PC-9 (cell line): ENCODE measurements at regions of chr14 and their contacts with region 1.

Region 1: DNA sequence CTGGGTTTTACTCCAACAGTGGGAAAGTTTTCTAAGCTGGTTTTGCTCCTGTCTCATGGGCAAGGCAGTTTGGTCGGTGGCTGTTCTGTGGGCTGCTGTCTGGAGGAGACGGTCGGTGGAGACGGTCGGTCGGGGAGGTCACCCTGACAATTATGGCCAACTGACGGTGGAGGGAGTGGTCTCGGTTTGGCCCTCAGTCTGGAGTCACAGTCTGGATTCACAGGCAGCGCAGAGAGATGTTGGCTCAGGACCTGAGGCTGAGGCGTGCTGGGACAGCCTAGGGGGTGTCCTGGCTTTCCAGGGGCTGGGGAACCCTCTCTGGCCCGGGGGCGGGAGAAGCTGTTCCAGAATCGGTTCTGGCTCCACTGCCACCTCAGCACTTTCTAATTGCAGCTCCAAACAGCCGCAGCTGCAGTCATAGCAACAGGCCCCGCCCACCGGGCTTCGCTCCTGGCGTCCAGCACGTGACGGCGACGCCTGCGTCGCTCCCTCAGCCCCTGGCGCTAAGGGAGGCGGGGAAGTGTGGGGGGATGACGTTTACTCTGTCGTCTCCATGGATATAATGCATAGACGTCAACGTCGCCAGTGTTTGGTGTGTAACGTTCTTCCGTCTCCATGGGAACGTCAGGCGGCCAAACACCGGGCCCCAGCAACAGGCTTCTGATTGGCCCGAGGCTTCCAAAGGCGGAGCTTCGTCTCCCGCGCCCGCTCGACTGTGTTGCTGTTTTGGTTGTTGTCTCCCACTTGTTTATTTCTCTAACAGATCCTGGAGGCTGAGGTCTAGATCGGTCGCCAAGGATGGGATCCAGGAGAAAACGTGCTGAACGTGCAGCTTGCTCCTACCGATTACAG is 19.8 kb upstream of the FOS start:
- DNase-seq: peak; percentile 100
- H3K4me3 ChIP-seq: peak overlapping the region; percentile 56
- H3K27ac ChIP-seq: peak overlapping the region; percentile 83
- H3K4me1 ChIP-seq: peaks cover 63% of the 10 kb centered on the region
- H3K27me3 ChIP-seq: no peaks in the 10 kb centered on the region
- CTCF ChIP-seq: no peak

Region 2: GRCh38 chr14:73913256-73913655 is 1345.6 kb before region 1 on chr14:
- CTCF ChIA-PET with region 1: no interaction called
- POLR2A ChIA-PET with region 1: no interaction called
- intact Hi-C with region 1: no loop called
- DNase-seq: no peak
- H3K4me3 ChIP-seq: no peak overlapping the region
- H3K27ac ChIP-seq: no peak overlapping the region
- H3K4me1 ChIP-seq: 0 out of 2 replicates have a peak, but pooled peaks cover 8% of the 10 kb centered on the region
- H3K27me3 ChIP-seq: no peaks in the 10 kb centered on the region
- CTCF ChIP-seq: no peak

Region 3: DNA sequence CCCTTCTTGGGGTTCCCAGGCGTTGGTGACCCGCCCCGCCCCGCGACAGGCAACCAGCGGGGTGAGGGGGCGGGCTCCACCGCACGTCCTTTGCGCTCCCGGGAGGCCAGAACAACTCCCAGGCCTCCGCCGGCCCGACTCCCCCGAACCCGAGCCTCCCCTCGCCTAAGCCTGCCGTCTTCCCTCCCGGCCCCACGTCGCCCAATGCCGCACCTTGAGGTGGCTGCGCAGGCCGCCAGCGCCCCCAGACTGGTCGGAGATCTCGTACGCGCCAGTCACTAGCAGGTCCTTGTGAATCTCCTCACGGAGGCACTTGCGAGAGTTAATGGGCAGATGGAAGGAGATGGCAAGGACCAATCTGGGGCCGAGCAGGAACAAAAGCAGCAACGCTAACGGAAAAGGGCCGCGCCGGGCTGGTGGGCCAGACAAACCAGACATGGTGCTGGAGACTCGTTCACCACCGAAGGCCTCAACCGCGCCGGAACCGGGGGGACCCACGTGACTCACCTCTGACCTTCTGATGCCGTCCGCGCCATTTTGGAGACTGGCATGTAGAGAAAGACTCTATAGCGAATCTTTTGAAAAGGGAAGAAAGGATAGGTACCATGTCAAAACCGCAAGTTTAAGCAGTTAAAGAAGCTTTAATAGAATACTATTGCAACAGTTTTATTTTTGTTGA is 82.6 kb before region 1 on chr14 and contains the start of gene TMED10:
- CTCF ChIA-PET with region 1: interaction called, 3 read pairs
- POLR2A ChIA-PET with region 1: interaction called, 11 read pairs
- intact Hi-C with region 1: loop called (anchors 1 kb)
- DNase-seq: peak; percentile 84 to 96
- H3K4me3 ChIP-seq: peak within 1 kb of the TSS; percentile 80
- H3K27ac ChIP-seq: peak within 1 kb of the TSS; percentile 94
- H3K4me1 ChIP-seq: peaks cover 26% of the 10 kb centered on the region
- H3K27me3 ChIP-seq: no peaks in the 10 kb centered on the region
- CTCF ChIP-seq: no peak
- total RNA-seq, gene TMED10: 709 and 770 TPM in 2 replicates

Region 4: DNA sequence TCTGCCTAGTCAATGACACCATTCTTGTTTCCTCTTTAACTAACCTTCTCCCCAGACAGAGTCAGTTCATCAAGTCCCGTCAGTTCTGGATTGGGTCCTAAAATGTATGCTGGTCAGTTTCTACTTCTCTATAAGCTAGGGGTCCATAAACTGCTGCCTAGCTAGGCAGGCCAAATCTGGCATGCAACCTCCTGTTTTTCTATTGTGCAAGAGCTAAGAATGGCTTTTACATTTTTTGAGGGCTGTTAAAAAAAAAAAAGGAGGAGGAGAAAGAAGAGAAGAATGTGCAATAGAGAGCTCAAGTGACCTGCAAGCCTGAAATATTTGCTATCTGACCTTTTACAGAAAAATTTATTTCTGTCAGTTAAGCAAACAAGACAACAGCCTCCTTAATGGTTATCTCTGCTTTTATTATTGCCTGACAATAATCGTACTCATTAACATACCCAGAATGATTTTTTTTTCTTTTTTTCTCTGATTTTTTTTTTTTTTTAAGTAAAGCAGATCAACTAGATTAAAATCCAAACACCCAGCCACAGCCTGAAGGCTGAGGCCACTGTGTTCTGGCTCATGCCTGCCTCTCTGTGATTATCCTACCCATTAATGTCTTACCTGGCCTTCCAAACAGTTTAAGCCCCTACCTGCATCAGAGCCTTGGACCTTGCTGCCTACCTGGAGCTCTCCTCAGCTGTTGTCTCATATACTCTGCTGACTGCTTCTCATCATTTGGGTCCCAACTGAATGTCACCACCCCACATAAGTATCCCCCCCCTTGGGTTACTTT is 75.8 kb before region 1 on chr14:
- CTCF ChIA-PET with region 1: interaction called, 3 read pairs
- POLR2A ChIA-PET with region 1: interaction called, 14 read pairs
- intact Hi-C with region 1: no loop called
- DNase-seq: peak; percentile 53 to 94
- H3K4me3 ChIP-seq: no peak overlapping the region
- H3K27ac ChIP-seq: peak overlapping the region; percentile 63
- H3K4me1 ChIP-seq: peaks cover 39% of the 10 kb centered on the region
- H3K27me3 ChIP-seq: no peaks in the 10 kb centered on the region
- CTCF ChIP-seq: no peak; the same call in 1 of the 2 replicates

Region 5: GRCh38 chr14:75198291-75198933 is 60.4 kb before region 1 on chr14:
- CTCF ChIA-PET with region 1: no interaction called
- POLR2A ChIA-PET with region 1: interaction called, 17 read pairs
- intact Hi-C with region 1: loop called (anchors 1 kb)
- DNase-seq: no peak
- H3K4me3 ChIP-seq: no peak overlapping the region
- H3K27ac ChIP-seq: no peak overlapping the region
- H3K4me1 ChIP-seq: peaks cover 56% of the 10 kb centered on the region
- H3K27me3 ChIP-seq: no peaks in the 10 kb centered on the region
- CTCF ChIP-seq: no peak

Region 6: DNA sequence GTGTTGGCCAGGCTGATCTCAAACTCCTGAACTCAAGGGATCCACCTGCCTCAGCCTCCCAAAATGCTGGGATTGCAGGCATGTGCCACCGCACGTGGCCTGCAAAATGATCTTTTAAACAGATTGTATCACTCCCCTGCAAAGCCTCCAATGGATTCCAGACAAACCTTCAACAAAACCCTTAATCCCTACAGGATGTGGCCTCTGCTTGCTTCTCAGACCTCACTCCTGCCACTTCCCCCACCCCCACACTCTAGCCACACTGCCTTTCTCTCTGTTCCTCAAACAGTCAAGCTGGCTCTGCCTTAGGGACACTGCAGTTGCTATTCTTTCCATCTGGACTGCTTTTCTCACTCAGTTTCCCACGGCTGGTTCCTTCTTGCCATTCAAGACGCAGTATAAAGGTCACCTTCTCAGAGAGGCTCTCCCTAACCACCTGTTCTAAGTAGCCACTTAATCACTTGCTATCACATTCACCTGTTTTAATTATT is 35.1 kb before region 1 on chr14:
- CTCF ChIA-PET with region 1: interaction called, 4 read pairs
- POLR2A ChIA-PET with region 1: interaction called, 3 read pairs
- intact Hi-C with region 1: loop called (anchors 5 kb)
- DNase-seq: peak; percentile 41 to 56
- H3K4me3 ChIP-seq: no peak overlapping the region
- H3K27ac ChIP-seq: peak overlapping the region; percentile 42
- H3K4me1 ChIP-seq: peaks cover 62% of the 10 kb centered on the region
- H3K27me3 ChIP-seq: no peaks in the 10 kb centered on the region
- CTCF ChIP-seq: no peak